Mammary epithelial cell (primary cell): ENCODE measurements at regions of chr2 and their contacts with region 1.

Region 1: GRCh38 chr2:117835990-117836760 is 21.7 kb downstream of the DDX18 start:
- DNase-seq: peak; percentile 39
- H3K4me3 ChIP-seq: peak overlapping the region in 1 of 3 experiments; percentile 20
- H3K27ac ChIP-seq: no peak overlapping the region
- H3K4me1 ChIP-seq: peaks cover 8% of the 10 kb centered on the region
- H3K27me3 ChIP-seq: no peaks in the 10 kb centered on the region
- CTCF ChIP-seq: peak; percentile 68 to 93

Region 2: DNA sequence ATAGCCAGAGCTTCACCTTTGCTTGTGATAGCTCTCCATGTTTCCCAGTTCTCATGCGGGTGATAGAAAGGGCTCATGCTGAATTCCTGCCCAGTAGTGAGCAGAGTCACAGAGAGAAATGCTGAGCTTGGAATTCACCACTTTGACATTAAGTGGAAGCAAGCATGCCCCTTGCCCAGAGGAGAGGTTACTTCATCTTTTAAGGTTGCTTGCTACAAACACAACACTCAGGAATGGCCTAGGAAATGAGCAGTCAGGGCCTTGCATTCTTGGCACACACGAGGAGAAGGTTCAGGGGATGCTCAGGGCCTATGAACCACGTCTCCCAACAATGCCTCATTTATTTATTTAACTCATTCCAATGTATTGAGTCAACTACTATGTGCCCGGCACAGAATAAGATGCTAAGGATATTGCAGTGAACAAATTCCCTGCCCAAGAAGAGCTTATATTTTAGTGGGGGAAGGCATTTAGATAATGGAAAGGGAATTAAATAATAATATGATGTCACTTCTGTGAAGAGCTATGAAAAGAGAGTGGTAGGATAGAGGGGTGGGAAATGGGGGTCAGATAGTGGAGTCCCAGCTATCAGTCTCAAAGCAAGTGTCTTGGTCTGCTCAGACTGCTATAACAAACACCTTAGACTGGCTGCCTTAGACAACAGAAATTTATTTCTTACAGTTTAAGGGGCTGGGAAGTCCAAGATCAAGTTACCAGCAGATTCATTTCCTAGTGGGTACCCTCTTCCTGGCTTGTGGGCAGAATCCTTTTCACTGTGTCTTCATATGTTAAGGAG is 20.4 kb after region 1 on chr2:
- CTCF ChIA-PET with region 1: interaction called, 5 read pairs
- dilution Hi-C with region 1: no loop called
- in situ Hi-C with region 1: no loop called
- intact Hi-C with region 1: loop called (anchors 1 kb)
- DNase-seq: peak; percentile 83
- H3K4me3 ChIP-seq: no peak overlapping the region
- H3K27ac ChIP-seq: no peak overlapping the region
- H3K4me1 ChIP-seq: peaks cover 15% of the 10 kb centered on the region
- H3K27me3 ChIP-seq: no peaks in the 10 kb centered on the region
- CTCF ChIP-seq: no peak

Region 3: GRCh38 chr2:117980783-117981676 is 144.9 kb after region 1 on chr2:
- CTCF ChIA-PET with region 1: no interaction called
- dilution Hi-C with region 1: no loop called
- in situ Hi-C with region 1: no loop called
- intact Hi-C with region 1: loop called (anchors 5 kb)
- DNase-seq: peak; percentile 97
- H3K4me3 ChIP-seq: no peak overlapping the region
- H3K27ac ChIP-seq: peak overlapping the region; percentile 86
- H3K4me1 ChIP-seq: peaks cover 30% of the 10 kb centered on the region
- H3K27me3 ChIP-seq: no peaks in the 10 kb centered on the region
- CTCF ChIP-seq: no peak